ENCODE measurements at regions of chr9 and their contacts with region 1.

Region 1: DNA sequence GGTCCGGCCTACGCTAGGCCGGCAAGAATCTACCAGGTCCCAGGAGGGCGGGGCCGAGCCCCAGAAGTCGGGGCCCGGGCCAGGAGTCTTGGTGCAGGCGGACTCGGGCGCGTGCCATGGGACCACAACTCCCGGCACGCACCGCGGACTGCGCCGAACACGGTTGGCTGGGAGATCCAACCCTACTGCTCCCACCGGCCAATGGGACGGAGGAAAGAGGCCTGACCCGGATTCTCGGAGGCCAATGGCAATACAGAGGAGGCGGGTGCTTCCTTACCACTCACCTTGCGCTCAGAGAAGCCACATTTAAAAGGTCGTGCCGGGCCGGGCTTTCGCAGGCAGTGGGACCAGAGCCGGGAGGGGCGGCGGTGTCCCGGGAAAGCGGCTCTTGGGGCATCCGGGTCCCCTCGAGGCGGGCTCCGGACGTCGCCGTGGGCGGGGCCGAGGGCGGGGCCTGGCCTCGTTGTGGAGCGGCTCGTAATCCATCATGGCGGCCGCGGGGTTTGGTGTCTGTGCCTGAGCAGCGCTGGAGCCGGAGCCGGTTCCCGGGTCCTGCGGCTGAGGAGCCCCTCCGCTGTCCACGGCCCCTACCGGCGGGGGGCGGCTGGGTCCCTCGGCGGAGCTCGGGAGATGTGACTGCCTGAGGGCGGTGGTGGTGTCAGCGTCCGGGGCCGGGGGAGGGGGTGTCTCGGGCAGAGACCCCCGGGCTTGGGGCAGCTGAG is 19.1 kb downstream of the EXOSC2 start:
- DNase-seq: peak; percentile 98 to 99
- H3K4me3 ChIP-seq: peak overlapping the region; percentile 80
- H3K4me3 Mint-ChIP-seq: peak overlapping the region; percentile 96
- H3K27ac Mint-ChIP-seq: peak overlapping the region; percentile 96
- H3K4me1 ChIP-seq: peaks cover 22% of the 10 kb centered on the region
- H3K4me1 Mint-ChIP-seq: peaks cover 8% of the 10 kb centered on the region
- H3K27me3 ChIP-seq: no peaks in the 10 kb centered on the region
- H3K27me3 Mint-ChIP-seq: no peaks in the 10 kb centered on the region
- CTCF ChIP-seq: no peak

Region 2: DNA sequence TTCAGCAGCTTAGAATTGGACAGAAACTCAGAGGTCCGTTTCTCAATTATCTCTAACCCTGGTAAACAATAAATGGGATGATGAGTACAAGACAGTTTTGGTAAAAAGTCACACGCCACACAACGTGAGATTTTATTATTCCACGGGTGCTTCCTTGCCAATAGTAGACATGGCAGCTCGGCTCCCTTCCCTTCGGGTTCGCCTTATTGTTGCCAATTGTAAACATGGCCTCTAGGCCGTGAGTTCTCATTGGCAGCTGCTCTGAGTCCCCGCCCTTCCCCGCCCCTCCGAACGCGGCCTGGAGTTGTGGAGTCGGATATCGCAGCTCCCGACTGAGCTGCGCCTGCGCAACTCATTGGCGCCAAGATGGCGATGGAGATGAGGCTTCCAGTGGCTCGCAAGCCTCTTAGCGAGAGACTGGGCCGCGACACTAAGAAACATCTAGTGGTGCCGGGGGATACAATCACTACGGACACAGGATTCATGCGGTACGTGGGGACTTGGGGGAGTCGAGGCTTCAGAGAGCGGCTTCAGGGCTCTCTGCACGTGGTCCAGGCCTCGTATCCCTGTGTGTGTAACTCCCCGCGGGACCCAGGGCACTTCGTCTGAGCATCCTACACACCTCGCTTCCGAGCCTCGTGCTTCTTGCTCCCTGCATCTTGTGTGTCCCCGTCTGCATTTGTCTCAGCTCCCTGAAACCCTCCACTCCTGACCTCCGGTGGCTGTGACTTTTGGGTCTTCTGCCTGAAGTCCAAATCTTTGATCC is 19.1 kb before region 1 on chr9 and contains the start of gene EXOSC2:
- CTCF ChIA-PET with region 1: no interaction called
- POLR2A ChIA-PET with region 1: no interaction called
- intact Hi-C with region 1: loop called (anchors 2 kb)
- DNase-seq: peak; percentile 91 to 99
- H3K4me3 ChIP-seq: peak within 1 kb of the TSS; percentile 70
- H3K4me3 Mint-ChIP-seq: peak within 1 kb of the TSS; percentile 95
- H3K27ac Mint-ChIP-seq: peak within 1 kb of the TSS; percentile 92
- H3K4me1 ChIP-seq: peaks cover 10% of the 10 kb centered on the region
- H3K4me1 Mint-ChIP-seq: peaks cover 16% of the 10 kb centered on the region
- H3K27me3 ChIP-seq: no peaks in the 10 kb centered on the region
- H3K27me3 Mint-ChIP-seq: no peaks in the 10 kb centered on the region
- CTCF ChIP-seq: no peak
- total RNA-seq, gene EXOSC2: 59.1 and 68.4 TPM in 2 replicates